ENCODE measurements at regions of chr22 and their contacts with region 1.

Region 1: GRCh38 chr22:26276529-26277160 is 107.4 kb downstream of the SEZ6L start:
- DNase-seq: no peak
- ATAC-seq: no peak
- H3K4me3 ChIP-seq: no peak overlapping the region
- H3K4me3 Mint-ChIP-seq: no peak overlapping the region
- H3K27ac ChIP-seq: no peak overlapping the region
- H3K27ac Mint-ChIP-seq: no peak overlapping the region
- H3K4me1 ChIP-seq: no peaks in the 10 kb centered on the region
- H3K4me1 Mint-ChIP-seq: no peaks in the 10 kb centered on the region
- H3K27me3 ChIP-seq: no peaks in the 10 kb centered on the region
- H3K27me3 Mint-ChIP-seq: peaks cover 28% of the 10 kb centered on the region
- CTCF ChIP-seq: no peak

Region 2: GRCh38 chr22:26287382-26288225 is 11.0 kb after region 1 on chr22:
- CTCF ChIA-PET with region 1: no interaction called
- POLR2A ChIA-PET with region 1: no interaction called
- intact Hi-C with region 1: loop called in 1 of 2 experiments (anchors 1 kb)
- DNase-seq: no peak
- ATAC-seq: no peak
- H3K4me3 ChIP-seq: no peak overlapping the region
- H3K4me3 Mint-ChIP-seq: no peak overlapping the region
- H3K27ac ChIP-seq: no peak overlapping the region
- H3K27ac Mint-ChIP-seq: no peak overlapping the region
- H3K4me1 ChIP-seq: no peaks in the 10 kb centered on the region
- H3K4me1 Mint-ChIP-seq: no peaks in the 10 kb centered on the region
- H3K27me3 ChIP-seq: peaks cover 0 to 6% of the 10 kb centered on the region in 2 experiments
- H3K27me3 Mint-ChIP-seq: peaks cover 52% of the 10 kb centered on the region
- CTCF ChIP-seq: no peak

Measured in CD4-positive, alpha-beta T cell (primary cell).